ENCODE measurements at regions of chr17 and their contacts with region 1.

Region 1: GRCh38 chr17:27226615-27227230 is 67.2 kb upstream of the WSB1 start:
- DNase-seq: peak; percentile 21 to 76
- H3K4me3 ChIP-seq: no peak overlapping the region
- H3K27ac ChIP-seq: no peak overlapping the region
- H3K4me1 ChIP-seq: peaks cover 18% of the 10 kb centered on the region
- H3K27me3 ChIP-seq: no peaks in the 10 kb centered on the region
- CTCF ChIP-seq: no peak

Region 2: DNA sequence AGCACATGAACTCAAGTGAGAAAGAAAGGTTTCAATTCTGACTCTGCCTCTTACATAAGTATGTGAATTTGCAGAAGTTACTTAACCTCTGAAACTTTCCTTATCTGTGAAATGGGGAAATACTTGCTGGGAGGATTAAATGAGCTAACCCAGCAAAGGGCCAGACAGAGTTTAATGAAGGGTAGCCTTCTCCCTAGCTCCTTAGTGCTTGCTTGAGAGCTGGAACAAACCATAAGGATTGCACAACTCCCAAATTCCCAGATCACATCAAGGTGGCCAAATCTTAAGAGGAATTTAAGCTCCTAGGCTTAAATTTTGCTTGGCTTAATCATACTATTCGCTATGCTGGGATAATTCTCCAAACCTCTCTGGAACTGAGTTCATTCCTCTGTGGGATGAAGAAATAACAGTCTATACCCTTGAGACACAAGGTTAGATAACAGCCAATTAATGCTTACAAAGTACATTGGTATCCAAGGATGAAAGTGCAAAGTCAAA is 55.4 kb after region 1 on chr17:
- CTCF ChIA-PET with region 1: no interaction called
- POLR2A ChIA-PET with region 1: interaction called, 10 read pairs
- intact Hi-C with region 1: no loop called
- DNase-seq: peak in 1 of 2 experiments; percentile 70
- H3K4me3 ChIP-seq: no peak overlapping the region
- H3K27ac ChIP-seq: no peak overlapping the region
- H3K4me1 ChIP-seq: no peaks in the 10 kb centered on the region
- H3K27me3 ChIP-seq: no peaks in the 10 kb centered on the region
- CTCF ChIP-seq: no peak

Measured in PC-9 (cell line).